ENCODE measurements at regions of chr4 and their contacts with region 1.

Region 1: DNA sequence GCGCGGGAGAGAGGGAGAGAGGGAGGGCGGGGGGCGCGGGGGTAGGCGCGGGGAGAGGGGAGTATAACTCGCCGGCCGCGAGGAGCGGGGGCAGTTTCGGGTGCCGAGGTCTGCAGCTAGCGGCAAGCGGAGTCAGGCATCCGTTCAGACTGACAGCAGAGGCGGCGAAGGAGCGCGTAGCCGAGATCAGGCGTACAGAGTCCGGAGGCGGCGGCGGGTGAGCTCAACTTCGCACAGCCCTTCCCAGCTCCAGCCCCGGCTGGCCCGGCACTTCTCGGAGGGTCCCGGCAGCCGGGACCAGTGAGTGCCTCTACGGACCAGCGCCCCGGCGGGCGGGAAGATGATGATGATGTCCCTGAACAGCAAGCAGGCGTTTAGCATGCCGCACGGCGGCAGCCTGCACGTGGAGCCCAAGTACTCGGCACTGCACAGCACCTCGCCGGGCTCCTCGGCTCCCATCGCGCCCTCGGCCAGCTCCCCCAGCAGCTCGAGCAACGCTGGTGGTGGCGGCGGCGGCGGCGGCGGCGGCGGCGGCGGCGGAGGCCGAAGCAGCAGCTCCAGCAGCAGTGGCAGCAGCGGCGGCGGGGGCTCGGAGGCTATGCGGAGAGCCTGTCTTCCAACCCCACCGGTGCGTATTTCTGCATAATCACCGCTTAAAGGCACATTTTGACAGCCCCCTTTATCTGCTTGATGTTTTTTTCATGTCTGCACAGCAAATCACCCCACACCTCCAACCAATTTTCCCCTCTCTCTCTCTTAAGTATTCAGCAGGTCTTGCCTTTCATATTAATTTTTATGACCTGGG is at the start of gene POU4F2:
- DNase-seq: no peak
- ATAC-seq: no peak
- H3K4me3 ChIP-seq: no peak within 1 kb of the TSS
- H3K27ac ChIP-seq: no peak within 1 kb of the TSS
- H3K4me1 ChIP-seq: no peaks in the 10 kb centered on the region
- H3K27me3 ChIP-seq: peaks cover 0 to 5% of the 10 kb centered on the region in 2 experiments; a peak in 1 of 5 replicates
- CTCF ChIP-seq: no peak
- EP300 ChIP-seq: no peak
- POLR2A ChIP-seq: no peak
- RAD21 ChIP-seq: no peak
- total RNA-seq, gene POU4F2: not detected in 2 replicates

Region 2: GRCh38 chr4:146545102-146545501 is 93.9 kb before region 1 on chr4:
- CTCF ChIA-PET with region 1: no interaction called
- POLR2A ChIA-PET with region 1: no interaction called
- in situ Hi-C with region 1: loop called (anchors 10 kb)
- intact Hi-C with region 1: no loop called
- DNase-seq: peak; percentile 27
- ATAC-seq: peak; percentile 94
- H3K4me3 ChIP-seq: no peak overlapping the region
- H3K27ac ChIP-seq: no peak overlapping the region
- H3K4me1 ChIP-seq: no peaks in the 10 kb centered on the region
- H3K27me3 ChIP-seq: no peaks in the 10 kb centered on the region
- CTCF ChIP-seq: peak; percentile 54
- EP300 ChIP-seq: no peak
- POLR2A ChIP-seq: no peak
- RAD21 ChIP-seq: peak; percentile 26; the same call in 1 of the 2 replicates